ENCODE measurements at regions of chr3 and their contacts with region 1.

Region 1: DNA sequence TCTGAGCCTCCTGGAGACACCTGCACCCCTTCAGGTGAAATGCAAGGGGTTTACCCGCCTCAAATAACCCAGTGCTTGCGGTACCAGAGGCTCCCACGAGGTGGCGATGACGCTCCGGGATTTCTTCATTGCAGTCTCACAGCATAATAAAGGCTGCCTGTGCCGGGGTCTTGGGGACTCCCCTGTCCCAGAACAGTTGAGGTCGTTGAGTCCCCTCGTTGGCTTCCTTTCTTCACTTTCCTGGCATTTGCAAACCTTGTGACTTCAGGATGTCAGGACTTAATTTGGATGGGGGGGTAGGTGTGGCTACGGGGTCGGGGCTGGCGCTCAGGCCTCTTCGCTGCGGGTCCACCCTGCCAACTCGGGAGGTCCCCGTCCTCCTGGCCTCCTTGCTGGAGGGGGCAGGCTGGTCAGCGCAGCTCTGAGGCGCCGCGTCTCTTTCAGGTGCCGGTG is 1.3 kb downstream of the GNAT1 start:
- DNase-seq: peak; percentile 90
- H3K4me3 Mint-ChIP-seq: no peak overlapping the region
- H3K27ac Mint-ChIP-seq: no peak overlapping the region
- H3K4me1 Mint-ChIP-seq: peaks cover 15% of the 10 kb centered on the region
- H3K27me3 Mint-ChIP-seq: peaks cover 8% of the 10 kb centered on the region

Region 2: DNA sequence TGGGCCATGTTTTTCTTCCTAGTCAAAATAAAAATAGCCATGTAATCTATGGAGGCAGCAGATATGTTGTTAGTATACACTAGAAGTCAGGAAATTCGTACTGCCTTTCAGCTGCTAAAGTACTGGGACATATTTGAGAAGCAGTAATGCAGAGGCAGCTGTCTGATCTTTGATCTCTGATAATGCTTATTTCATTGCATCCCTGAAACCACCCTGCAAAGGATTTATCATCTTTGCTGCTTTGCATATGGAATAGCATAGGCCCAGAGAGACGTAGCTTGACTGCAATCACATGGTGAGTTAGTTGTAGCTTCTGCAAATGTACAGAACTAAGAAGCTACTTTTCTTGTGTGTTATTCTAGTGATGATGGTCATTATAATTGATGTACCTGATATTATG is 200.4 kb before region 1 on chr3:
- CTCF ChIA-PET with region 1: no interaction called
- intact Hi-C with region 1: no loop called
- DNase-seq: no peak
- H3K4me3 Mint-ChIP-seq: no peak overlapping the region
- H3K27ac Mint-ChIP-seq: no peak overlapping the region
- H3K4me1 Mint-ChIP-seq: peaks cover 4% of the 10 kb centered on the region
- H3K27me3 Mint-ChIP-seq: no peaks in the 10 kb centered on the region

Region 3: GRCh38 chr3:50154840-50155474 is 37.8 kb before region 1 on chr3 and contains the start of gene SEMA3F:
- CTCF ChIA-PET with region 1: interaction called, 4 read pairs
- intact Hi-C with region 1: loop called (anchors 2 kb)
- DNase-seq: peak; percentile 50
- H3K4me3 Mint-ChIP-seq: peak within 1 kb of the TSS; percentile 65
- H3K27ac Mint-ChIP-seq: no peak within 1 kb of the TSS
- H3K4me1 Mint-ChIP-seq: peaks cover 6% of the 10 kb centered on the region
- H3K27me3 Mint-ChIP-seq: peaks cover 26% of the 10 kb centered on the region
- total RNA-seq, gene SEMA3F: not detected

Region 4: DNA sequence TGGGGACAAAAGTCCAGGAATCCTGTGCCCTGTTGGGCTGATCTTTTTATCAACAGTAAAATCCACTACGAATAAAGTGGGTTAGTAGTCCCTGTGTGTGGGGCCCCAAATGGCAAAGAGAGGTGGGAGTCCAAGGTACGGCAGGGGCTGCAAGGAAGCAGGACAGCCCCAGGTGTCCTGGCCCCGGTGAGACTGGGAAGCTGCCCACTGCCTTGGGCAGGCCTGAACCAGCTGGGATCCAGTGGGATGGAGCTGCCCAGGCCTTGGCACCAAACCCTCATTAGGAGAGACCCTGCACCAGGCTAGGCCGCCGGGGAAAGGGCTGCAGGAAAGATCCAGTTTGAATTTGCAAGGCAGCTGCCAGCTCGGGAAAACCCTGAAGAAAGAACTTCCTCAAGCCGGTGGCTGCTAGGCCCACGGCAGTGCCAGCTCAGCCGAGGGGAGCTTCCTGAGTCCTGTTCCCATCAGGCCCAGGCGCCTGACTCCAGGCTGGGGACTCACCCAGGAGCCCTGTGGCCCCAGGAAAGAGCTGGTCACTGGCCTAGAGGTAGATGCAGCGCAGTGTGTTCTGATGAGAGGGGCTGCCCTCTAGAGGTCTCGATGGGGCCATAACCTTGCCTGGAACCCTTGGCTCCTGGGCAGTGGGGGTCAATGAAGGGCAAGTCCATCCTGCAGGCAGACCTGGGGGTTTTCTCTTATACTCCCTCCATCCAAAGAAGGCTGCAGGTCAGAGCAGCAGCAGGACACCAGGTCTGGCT is 28.9 kb after region 1 on chr3:
- CTCF ChIA-PET with region 1: interaction called, 151 read pairs
- intact Hi-C with region 1: loop called (anchors 1 kb)
- DNase-seq: no peak
- H3K4me3 Mint-ChIP-seq: no peak overlapping the region
- H3K27ac Mint-ChIP-seq: no peak overlapping the region
- H3K4me1 Mint-ChIP-seq: peaks cover 6% of the 10 kb centered on the region
- H3K27me3 Mint-ChIP-seq: no peaks in the 10 kb centered on the region

Region 5: DNA sequence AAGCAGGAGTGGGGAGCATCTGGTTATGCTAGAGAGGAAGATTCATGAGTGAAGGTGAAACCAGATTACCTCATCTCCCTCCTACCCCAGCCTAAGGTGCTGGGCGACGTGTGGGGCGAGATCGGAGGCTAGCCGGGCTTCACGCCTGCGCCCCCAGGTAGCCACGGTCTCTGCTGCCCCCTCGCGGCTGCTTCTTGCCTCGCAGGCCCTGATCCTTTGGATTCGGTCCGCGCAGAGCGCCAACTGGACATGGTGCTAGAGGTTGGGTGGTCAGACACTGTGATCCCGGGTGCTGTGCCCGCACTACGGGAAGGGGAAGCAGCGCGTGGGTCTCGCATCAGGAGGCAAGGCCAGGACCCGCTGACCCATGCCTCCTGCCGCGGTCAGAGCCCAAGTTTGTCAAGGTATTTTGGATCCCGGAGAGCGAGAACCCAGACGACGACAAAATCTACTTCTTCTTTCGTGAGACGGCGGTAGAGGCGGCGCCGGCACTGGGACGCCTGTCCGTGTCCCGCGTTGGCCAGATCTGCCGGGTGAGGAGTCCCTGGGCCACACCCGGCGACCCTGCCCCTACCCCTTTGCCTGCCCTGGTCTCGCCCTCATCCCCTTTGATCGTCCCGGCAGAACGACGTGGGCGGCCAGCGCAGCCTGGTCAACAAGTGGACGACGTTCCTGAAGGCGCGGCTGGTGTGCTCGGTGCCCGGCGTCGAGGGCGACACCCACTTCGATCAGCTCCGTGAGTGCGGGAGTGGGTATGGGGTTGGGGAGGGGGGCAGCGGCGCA is 80.4 kb after region 1 on chr3:
- CTCF ChIA-PET with region 1: interaction called, 16 read pairs
- intact Hi-C with region 1: loop called (anchors 1 kb)
- DNase-seq: peak; percentile 93
- H3K4me3 Mint-ChIP-seq: peak overlapping the region; percentile 39
- H3K27ac Mint-ChIP-seq: no peak overlapping the region
- H3K4me1 Mint-ChIP-seq: peaks cover 31% of the 10 kb centered on the region
- H3K27me3 Mint-ChIP-seq: peaks cover 34% of the 10 kb centered on the region

Region 6: DNA sequence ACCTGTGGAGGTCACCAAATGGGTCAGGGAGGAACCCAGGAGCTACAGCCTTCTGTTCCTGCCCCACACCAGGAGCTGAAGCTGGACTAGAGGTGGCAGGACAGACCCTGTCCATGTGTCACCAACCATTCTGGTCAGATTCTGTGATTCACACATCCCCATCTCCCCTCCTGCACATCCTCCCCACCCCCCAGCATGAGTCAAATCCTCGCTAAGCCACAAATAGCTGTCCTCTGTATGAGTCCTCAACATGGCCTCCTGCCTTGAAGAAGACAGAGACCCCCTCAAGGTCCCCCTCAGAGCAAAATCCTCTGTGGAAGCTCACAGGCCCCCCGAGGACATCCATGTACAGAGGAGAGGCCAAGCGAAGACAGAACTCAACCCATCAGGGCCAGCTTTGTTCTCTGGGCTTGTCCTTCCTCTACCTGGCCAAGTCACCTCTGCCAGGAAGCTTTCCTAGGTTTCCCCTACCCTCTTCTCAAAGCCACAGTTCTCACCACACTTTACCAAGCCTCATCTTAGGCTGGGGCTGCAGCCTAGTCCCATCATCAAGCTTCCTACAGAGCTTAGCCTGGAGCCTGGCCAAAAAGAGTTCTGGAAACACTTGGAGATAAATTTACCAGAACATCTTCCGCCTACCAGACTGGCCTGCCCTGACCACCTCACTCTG is 293.6 kb after region 1 on chr3:
- CTCF ChIA-PET with region 1: no interaction called
- intact Hi-C with region 1: no loop called
- DNase-seq: no peak
- H3K4me3 Mint-ChIP-seq: no peak overlapping the region
- H3K27ac Mint-ChIP-seq: no peak overlapping the region
- H3K4me1 Mint-ChIP-seq: peaks cover 12% of the 10 kb centered on the region
- H3K27me3 Mint-ChIP-seq: no peaks in the 10 kb centered on the region